Calu3 (cell line): ENCODE measurements at regions of chrX and their contacts with region 1.

Region 1: DNA sequence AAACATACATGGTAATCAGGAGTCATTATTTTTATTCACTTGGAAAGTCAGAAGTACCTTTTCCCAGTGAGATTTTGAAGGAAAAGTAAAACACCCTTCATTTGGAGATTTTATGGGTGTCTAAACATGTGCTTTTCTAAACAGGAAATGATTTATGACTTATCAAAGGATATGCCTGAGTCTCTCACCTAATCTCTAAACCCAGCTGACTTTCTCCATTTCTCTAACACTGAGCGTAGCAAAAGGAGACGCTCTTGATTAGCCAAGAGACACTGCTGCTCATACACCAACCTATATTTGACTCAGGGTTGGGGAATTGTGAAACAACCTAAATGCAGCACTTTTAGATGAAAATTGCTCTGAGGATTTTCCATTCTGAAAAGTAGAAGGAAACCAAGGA is 468.5 kb upstream of the FTHL17 start:
- DNase-seq: no peak
- H3K4me3 Mint-ChIP-seq: no peak overlapping the region
- H3K27ac Mint-ChIP-seq: no peak overlapping the region
- H3K4me1 Mint-ChIP-seq: peaks cover 7% of the 10 kb centered on the region
- H3K27me3 Mint-ChIP-seq: no peaks in the 10 kb centered on the region
- CTCF ChIP-seq: no peak

Region 2: DNA sequence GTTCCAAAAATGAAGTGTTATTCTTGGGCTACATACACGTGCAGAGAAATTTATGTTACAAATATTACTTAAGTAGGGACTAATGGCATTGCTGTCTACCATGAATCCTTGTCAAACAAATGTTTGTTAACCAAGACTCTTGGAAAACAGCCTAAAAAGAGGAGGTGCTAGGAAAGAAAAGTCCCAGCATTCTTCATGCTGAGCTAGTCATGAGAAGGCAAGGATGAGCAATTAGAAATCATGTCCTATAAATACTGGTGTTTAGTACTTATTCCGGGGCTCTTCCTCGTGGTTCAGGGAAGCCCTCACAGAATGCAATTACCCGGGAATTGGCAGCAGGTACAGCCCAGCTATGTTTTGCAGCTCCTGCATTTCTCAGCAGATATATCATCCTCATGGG is 90.3 kb before region 1 on chrX:
- CTCF ChIA-PET with region 1: no interaction called
- intact Hi-C with region 1: no loop called
- DNase-seq: no peak
- H3K4me3 Mint-ChIP-seq: no peak overlapping the region
- H3K27ac Mint-ChIP-seq: no peak overlapping the region
- H3K4me1 Mint-ChIP-seq: no peaks in the 10 kb centered on the region
- H3K27me3 Mint-ChIP-seq: no peaks in the 10 kb centered on the region
- CTCF ChIP-seq: no peak

Region 3: GRCh38 chrX:31633349-31633748 is 93.0 kb after region 1 on chrX:
- CTCF ChIA-PET with region 1: no interaction called
- intact Hi-C with region 1: no loop called
- DNase-seq: no peak
- H3K4me3 Mint-ChIP-seq: no peak overlapping the region
- H3K27ac Mint-ChIP-seq: no peak overlapping the region
- H3K4me1 Mint-ChIP-seq: no peaks in the 10 kb centered on the region
- H3K27me3 Mint-ChIP-seq: no peaks in the 10 kb centered on the region
- CTCF ChIP-seq: no peak

Region 4: DNA sequence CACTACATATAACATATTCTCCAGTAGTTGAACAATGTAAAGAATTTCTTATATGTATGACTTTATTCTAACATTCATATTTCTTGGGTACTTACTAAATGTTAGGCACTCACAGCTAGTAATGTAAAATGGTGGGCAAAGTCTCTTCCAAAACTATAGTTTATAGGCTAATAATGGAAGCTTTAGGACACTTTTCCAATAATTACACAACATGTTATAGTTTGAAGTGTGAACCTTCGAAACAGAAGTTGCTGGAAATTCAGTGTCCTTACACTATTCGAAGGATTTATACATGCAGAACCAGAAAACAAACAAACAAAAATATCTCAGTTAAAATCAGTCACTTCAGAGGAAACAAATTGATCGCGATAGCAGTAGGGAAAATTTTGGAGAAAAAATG is 1458.5 kb after region 1 on chrX:
- CTCF ChIA-PET with region 1: interaction called, 11 read pairs
- intact Hi-C with region 1: no loop called
- DNase-seq: no peak
- H3K4me3 Mint-ChIP-seq: no peak overlapping the region
- H3K27ac Mint-ChIP-seq: no peak overlapping the region
- H3K4me1 Mint-ChIP-seq: no peaks in the 10 kb centered on the region
- H3K27me3 Mint-ChIP-seq: no peaks in the 10 kb centered on the region
- CTCF ChIP-seq: no peak